K562 (cell line): ENCODE measurements at regions of chr2 and their contacts with region 1.

Region 1: GRCh38 chr2:88919087-88919738 is 227.7 kb downstream of the RPIA start:
- DNase-seq: peak in 3 of 4 experiments; percentile 13 to 41 (median 17)
- ATAC-seq: peak; percentile 63; the same call in 1 of the 3 replicates
- H3K4me3 ChIP-seq: no peak overlapping the region
- H3K27ac ChIP-seq: no peak overlapping the region
- H3K4me1 ChIP-seq: no peaks in the 10 kb centered on the region
- H3K27me3 ChIP-seq: no peaks in the 10 kb centered on the region
- CTCF ChIP-seq: peak; percentile 53 to 64 (median 55); a peak in 5 of 6 replicates
- EP300 ChIP-seq: no peak
- POLR2A ChIP-seq: no peak
- RAD21 ChIP-seq: peak; percentile 37 to 44

Region 2: GRCh38 chr2:88739985-88740600 is 179.1 kb before region 1 on chr2:
- CTCF ChIA-PET with region 1: interaction called, 3 read pairs
- POLR2A ChIA-PET with region 1: no interaction called
- in situ Hi-C with region 1: no loop called
- intact Hi-C with region 1: loop called (anchors 5 kb)
- DNase-seq: peak; percentile 77 to 81 (median 79)
- ATAC-seq: peak; percentile 94
- H3K4me3 ChIP-seq: no peak overlapping the region
- H3K27ac ChIP-seq: no peak overlapping the region
- H3K4me1 ChIP-seq: peaks cover 3 to 10% of the 10 kb centered on the region in 2 experiments; a peak in 3 of 5 replicates
- H3K27me3 ChIP-seq: no peaks in the 10 kb centered on the region
- CTCF ChIP-seq: peak; percentile 73 to 88 (median 87)
- EP300 ChIP-seq: no peak
- POLR2A ChIP-seq: no peak
- RAD21 ChIP-seq: peak; percentile 53 to 80

Region 3: GRCh38 chr2:88868861-88869260 is 50.4 kb before region 1 on chr2:
- CTCF ChIA-PET with region 1: no interaction called
- POLR2A ChIA-PET with region 1: no interaction called
- in situ Hi-C with region 1: no loop called
- intact Hi-C with region 1: no loop called
- DNase-seq: no peak
- ATAC-seq: no peak
- H3K4me3 ChIP-seq: no peak overlapping the region
- H3K27ac ChIP-seq: no peak overlapping the region
- H3K4me1 ChIP-seq: no peaks in the 10 kb centered on the region
- H3K27me3 ChIP-seq: peaks cover 0 to 9% of the 10 kb centered on the region in 2 experiments; a peak in 2 of 5 replicates
- CTCF ChIP-seq: no peak
- EP300 ChIP-seq: no peak
- POLR2A ChIP-seq: no peak
- RAD21 ChIP-seq: no peak

Region 4: GRCh38 chr2:88880441-88880953 is 38.7 kb before region 1 on chr2:
- CTCF ChIA-PET with region 1: interaction called, 6 read pairs
- POLR2A ChIA-PET with region 1: no interaction called
- in situ Hi-C with region 1: no loop called
- intact Hi-C with region 1: loop called (anchors 5 kb)
- DNase-seq: peak; percentile 49 to 65 (median 54)
- ATAC-seq: peak; percentile 86
- H3K4me3 ChIP-seq: no peak overlapping the region
- H3K27ac ChIP-seq: no peak overlapping the region
- H3K4me1 ChIP-seq: no peaks in the 10 kb centered on the region
- H3K27me3 ChIP-seq: no peaks in the 10 kb centered on the region
- CTCF ChIP-seq: peak; percentile 69 to 79 (median 71)
- EP300 ChIP-seq: no peak
- POLR2A ChIP-seq: no peak
- RAD21 ChIP-seq: peak; percentile 49 to 65